Activated CD4-positive, alpha-beta T cell treated with anti-CD3 and anti-CD28 coated beads, Interleukin-2, amount 10 ng/mL, durations not matched to agents 24 days and 14 days (primary cell): ENCODE measurements at regions of chr21 and their contacts with region 1.

Region 1: GRCh38 chr21:14686466-14687267 is 140.6 kb upstream of the SAMSN1 start:
- DNase-seq: no peak
- H3K4me3 Mint-ChIP-seq: peak overlapping the region; percentile 25
- H3K27ac Mint-ChIP-seq: peak overlapping the region; percentile 31
- H3K4me1 Mint-ChIP-seq: peaks cover 46% of the 10 kb centered on the region
- H3K27me3 Mint-ChIP-seq: no peaks in the 10 kb centered on the region

Region 2: GRCh38 chr21:14722841-14723483 is 36.3 kb after region 1 on chr21:
- intact Hi-C with region 1: loop called (anchors 5 kb)
- DNase-seq: no peak
- H3K4me3 Mint-ChIP-seq: no peak overlapping the region
- H3K27ac Mint-ChIP-seq: peak overlapping the region; percentile 67
- H3K4me1 Mint-ChIP-seq: peaks cover 20% of the 10 kb centered on the region
- H3K27me3 Mint-ChIP-seq: no peaks in the 10 kb centered on the region